ENCODE measurements at regions of chr12 and their contacts with region 1.

Region 1: DNA sequence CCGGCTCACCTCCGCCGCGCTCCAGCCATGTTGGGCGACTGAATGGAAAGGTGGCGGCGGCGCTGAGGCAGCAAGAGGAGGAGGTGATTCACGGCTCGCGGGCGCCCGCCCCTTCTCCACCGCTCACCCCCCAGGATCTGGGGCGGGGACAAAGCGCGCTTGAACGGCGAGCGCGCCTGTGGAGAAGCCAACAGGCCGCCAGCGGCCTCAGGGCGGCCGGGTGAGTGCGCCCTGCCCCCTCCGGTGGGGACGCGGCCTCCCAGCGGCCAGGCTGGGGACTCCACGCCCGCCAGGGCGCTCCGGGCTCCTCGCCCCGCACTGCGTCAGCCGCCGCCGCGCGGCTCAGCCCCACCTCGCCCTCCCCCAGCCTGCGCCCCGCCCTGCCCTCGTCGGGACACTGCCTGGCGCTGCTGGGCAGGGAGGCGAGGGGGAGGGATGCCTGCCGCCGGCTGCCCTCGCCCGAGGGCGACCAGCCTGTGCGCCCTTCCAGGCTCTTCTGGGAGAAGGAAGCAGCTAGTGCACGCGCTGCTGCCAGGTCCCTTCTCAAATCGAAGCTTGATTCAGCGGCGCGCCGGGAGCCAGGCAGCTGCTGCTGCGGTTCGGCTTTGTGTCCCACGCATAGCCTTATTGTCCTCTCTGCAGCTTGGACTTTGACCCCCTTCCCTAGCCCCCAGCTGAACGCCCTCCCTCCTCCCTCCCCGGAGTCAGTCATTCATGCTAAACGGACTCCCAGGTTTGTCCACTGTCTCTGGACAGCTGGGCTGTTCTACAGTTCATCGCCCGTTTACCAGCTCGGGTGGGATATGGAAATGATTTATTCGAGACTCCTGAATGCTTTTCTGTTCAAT is at the start of gene KIF21A:
- DNase-seq: peak; percentile 90
- CTCF ChIP-seq: peak; percentile 48

Region 2: GRCh38 chr12:39426636-39427245 is 16.6 kb before region 1 on chr12:
- CTCF ChIA-PET with region 1: interaction called, 14 read pairs
- POLR2A ChIA-PET with region 1: no interaction called
- DNase-seq: no peak
- CTCF ChIP-seq: no peak

Region 3: DNA sequence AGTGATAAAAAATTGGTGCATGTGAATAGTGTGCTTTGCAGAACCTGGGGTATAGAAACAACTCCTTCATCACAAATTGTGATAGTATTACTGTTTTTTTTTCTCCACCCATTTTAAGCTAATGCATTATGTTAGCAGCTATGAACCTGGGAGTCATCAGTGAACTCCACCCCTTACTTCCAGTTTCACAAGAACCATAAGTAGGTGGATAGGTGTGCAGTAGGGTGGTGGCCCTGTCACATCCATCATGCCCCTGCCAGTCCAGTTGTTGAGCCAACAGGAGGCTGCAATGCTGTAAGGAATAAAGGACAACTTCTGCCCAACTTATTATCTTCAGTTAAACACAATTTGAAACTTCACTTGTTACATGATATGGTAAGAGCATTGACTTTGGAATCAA is 90.6 kb after region 1 on chr12:
- CTCF ChIA-PET with region 1: no interaction called
- POLR2A ChIA-PET with region 1: no interaction called
- DNase-seq: no peak
- CTCF ChIP-seq: no peak

Measured in GM10248 (cell line).